K562 (cell line): ENCODE measurements at regions of chr2 and their contacts with region 1.

Region 1: DNA sequence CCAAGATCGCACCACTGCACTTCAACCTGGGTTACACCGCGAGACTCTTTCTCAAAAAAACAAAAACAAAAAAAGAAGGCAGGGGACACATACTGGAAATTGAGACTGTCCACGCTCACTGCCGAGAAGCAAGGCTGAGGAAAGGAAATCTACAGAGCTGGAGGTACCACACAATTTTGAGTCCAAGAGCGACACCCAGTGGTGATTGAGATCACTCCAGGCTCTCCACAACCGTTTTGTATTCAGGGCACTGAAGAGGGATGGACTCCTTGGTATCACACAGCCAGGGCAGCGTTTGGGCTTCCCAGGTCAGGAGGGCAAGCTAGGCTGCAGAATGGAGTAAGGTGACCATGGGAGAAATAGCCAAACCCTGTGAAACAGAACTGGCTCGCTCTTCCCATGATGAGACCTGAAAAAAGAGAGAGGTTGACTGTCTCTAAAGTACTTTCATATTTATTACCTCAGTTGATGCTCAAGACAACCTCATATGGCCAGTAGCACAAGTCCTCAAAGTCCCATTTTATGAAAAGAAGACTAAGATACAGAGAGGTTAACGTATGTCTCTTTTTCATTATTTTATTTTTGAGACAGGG is 74.5 kb upstream of the YPEL5 start:
- DNase-seq: peak; percentile 57 to 80 (median 63)
- ATAC-seq: peak; percentile 100
- H3K4me3 ChIP-seq: no peak overlapping the region
- H3K27ac ChIP-seq: no peak overlapping the region
- H3K4me1 ChIP-seq: no peaks in the 10 kb centered on the region
- H3K27me3 ChIP-seq: peaks cover 3 to 18% of the 10 kb centered on the region in 2 experiments; a peak in 3 of 5 replicates
- CTCF ChIP-seq: peak; percentile 67 to 85 (median 75)
- EP300 ChIP-seq: no peak
- POLR2A ChIP-seq: no peak
- RAD21 ChIP-seq: peak; percentile 62 to 82

Region 2: DNA sequence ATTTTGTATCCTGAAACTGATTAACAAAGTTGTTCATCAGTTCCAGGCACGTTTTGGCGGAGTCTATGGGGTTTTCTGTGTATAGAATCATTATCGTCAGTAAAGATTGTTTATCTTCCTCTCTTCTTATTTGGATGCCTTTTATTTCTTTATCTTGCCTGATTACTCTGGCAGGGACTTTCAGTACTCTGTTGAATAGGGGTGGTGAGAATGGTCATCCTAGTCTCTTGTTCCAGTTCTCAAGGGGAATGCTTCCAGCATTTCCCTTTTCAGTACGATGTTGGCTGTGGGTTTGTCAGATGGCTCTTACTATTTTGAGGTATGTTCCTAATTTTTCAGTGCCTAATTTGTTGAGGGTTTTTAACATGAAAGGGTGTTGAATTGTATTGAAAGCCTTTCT is 1275.7 kb before region 1 on chr2:
- CTCF ChIA-PET with region 1: no interaction called
- POLR2A ChIA-PET with region 1: no interaction called
- in situ Hi-C with region 1: no loop called
- intact Hi-C with region 1: no loop called
- DNase-seq: no peak
- ATAC-seq: no peak
- H3K4me3 ChIP-seq: no peak overlapping the region
- H3K27ac ChIP-seq: no peak overlapping the region
- H3K4me1 ChIP-seq: no peaks in the 10 kb centered on the region
- H3K27me3 ChIP-seq: no peaks in the 10 kb centered on the region
- CTCF ChIP-seq: no peak
- EP300 ChIP-seq: no peak
- POLR2A ChIP-seq: no peak
- RAD21 ChIP-seq: no peak

Region 3: GRCh38 chr2:29841386-29842004 is 230.9 kb before region 1 on chr2:
- CTCF ChIA-PET with region 1: no interaction called
- POLR2A ChIA-PET with region 1: no interaction called
- in situ Hi-C with region 1: no loop called
- intact Hi-C with region 1: loop called (anchors 1 kb)
- DNase-seq: peak; percentile 43 to 72 (median 60)
- ATAC-seq: peak; percentile 79
- H3K4me3 ChIP-seq: no peak overlapping the region
- H3K27ac ChIP-seq: no peak overlapping the region
- H3K4me1 ChIP-seq: no peaks in the 10 kb centered on the region
- H3K27me3 ChIP-seq: no peaks in the 10 kb centered on the region
- CTCF ChIP-seq: peak; percentile 66 to 85 (median 73)
- EP300 ChIP-seq: no peak
- POLR2A ChIP-seq: no peak
- RAD21 ChIP-seq: peak in 1 of 2 experiments; percentile 64; a peak in 3 of 4 replicates

Region 4: DNA sequence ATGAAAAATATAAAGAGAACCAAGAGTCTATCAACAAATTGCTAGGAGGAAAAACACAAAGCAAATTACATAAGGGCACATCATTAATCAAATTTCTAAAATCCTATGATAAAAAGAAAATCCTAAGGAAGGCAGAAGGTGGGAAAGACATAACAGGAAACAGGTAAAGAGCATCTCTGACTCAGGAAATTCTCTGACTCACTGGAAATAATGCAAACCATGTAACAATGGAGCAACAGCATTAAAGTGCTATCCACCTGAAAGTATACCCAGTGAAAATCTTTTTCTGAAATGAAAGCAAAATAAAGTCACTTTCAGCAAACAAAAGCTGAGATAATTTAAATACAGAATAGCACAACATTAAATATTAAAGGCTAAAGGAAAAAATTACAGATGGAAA is 161.9 kb before region 1 on chr2:
- CTCF ChIA-PET with region 1: no interaction called
- POLR2A ChIA-PET with region 1: no interaction called
- in situ Hi-C with region 1: no loop called
- intact Hi-C with region 1: no loop called
- DNase-seq: no peak
- ATAC-seq: no peak
- H3K4me3 ChIP-seq: no peak overlapping the region
- H3K27ac ChIP-seq: no peak overlapping the region
- H3K4me1 ChIP-seq: no peaks in the 10 kb centered on the region
- H3K27me3 ChIP-seq: no peaks in the 10 kb centered on the region; a peak in 1 of 5 replicates
- CTCF ChIP-seq: no peak
- EP300 ChIP-seq: no peak
- POLR2A ChIP-seq: no peak
- RAD21 ChIP-seq: no peak

Region 5: DNA sequence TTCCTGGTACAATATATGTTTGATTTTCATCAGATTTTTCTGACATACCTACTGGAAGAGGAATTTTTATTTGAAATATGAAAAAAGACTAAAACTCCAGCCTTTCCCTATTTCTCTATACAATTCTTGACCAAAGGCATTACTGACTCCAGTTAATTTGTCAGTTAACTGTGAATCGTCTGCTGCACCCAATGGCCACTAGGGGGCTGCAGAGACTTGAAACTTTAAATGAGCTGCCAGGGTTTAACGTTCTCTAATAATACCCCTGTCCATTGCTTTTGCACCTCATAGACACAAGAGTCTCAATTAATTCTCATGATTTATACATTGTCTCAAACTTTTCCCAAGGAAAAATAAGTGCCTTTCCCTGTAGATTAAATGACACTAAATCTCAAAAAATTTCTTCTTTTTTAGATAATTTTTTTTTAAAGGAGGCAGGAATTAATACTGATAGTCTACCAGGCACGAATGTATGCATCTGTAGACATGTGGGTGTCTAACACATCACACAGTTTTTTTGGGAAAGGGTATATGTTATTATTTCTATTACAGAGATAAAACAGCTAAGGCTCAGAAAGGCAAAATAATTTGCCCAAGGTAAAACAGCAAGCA is 149.1 kb before region 1 on chr2:
- CTCF ChIA-PET with region 1: interaction called, 7 read pairs
- POLR2A ChIA-PET with region 1: no interaction called
- in situ Hi-C with region 1: no loop called
- intact Hi-C with region 1: loop called (anchors 1 kb)
- DNase-seq: peak; percentile 60 to 70 (median 68)
- ATAC-seq: peak; percentile 36; the same call in 1 of the 3 replicates
- H3K4me3 ChIP-seq: no peak overlapping the region
- H3K27ac ChIP-seq: no peak overlapping the region
- H3K4me1 ChIP-seq: peaks cover 0 to 17% of the 10 kb centered on the region in 2 experiments; a peak in 3 of 5 replicates
- H3K27me3 ChIP-seq: peaks cover 3 to 15% of the 10 kb centered on the region in 2 experiments; a peak in 3 of 5 replicates
- CTCF ChIP-seq: peak; percentile 71 to 85 (median 83)
- EP300 ChIP-seq: no peak
- POLR2A ChIP-seq: no peak
- RAD21 ChIP-seq: peak; percentile 51 to 68

Region 6: GRCh38 chr2:29940706-29941105 is 131.6 kb before region 1 on chr2:
- CTCF ChIA-PET with region 1: no interaction called
- POLR2A ChIA-PET with region 1: no interaction called
- in situ Hi-C with region 1: no loop called
- intact Hi-C with region 1: no loop called
- DNase-seq: no peak
- ATAC-seq: no peak
- H3K4me3 ChIP-seq: no peak overlapping the region
- H3K27ac ChIP-seq: no peak overlapping the region
- H3K4me1 ChIP-seq: no peaks in the 10 kb centered on the region
- H3K27me3 ChIP-seq: no peaks in the 10 kb centered on the region
- CTCF ChIP-seq: no peak
- EP300 ChIP-seq: no peak
- POLR2A ChIP-seq: no peak
- RAD21 ChIP-seq: no peak